Ovary (tissue), 10 donors: ENCODE measurements at regions of chrX and their contacts with region 1.

Region 1: DNA sequence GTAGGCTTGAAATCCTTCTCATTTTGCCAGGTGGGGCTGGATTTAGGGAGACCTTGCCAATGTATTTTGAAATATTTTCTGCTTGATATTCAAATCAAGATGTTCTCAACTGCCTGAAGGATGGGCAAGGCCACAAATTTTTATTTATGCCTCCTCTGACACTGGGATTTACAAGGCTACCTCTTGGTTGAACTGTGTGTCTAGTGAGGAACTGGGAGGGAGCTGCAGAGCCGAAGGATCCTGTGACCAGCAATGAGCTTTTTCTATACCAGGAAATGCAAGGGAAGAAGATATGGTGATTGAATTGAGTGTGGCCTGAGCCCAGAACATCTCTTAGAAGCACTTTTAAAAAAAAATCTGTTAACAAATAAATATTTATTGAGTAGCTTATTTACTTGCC is 14.9 kb downstream of the VSIG1 start:
- DNase-seq: no peak
- H3K4me3 ChIP-seq: no peak overlapping the region
- H3K27ac ChIP-seq: no peak overlapping the region
- H3K4me1 ChIP-seq: no peaks in the 10 kb centered on the region
- H3K27me3 ChIP-seq: no peaks in the 10 kb centered on the region
- CTCF ChIP-seq: no peak
- EP300 ChIP-seq: no peak
- POLR2A ChIP-seq: no peak

Region 2: DNA sequence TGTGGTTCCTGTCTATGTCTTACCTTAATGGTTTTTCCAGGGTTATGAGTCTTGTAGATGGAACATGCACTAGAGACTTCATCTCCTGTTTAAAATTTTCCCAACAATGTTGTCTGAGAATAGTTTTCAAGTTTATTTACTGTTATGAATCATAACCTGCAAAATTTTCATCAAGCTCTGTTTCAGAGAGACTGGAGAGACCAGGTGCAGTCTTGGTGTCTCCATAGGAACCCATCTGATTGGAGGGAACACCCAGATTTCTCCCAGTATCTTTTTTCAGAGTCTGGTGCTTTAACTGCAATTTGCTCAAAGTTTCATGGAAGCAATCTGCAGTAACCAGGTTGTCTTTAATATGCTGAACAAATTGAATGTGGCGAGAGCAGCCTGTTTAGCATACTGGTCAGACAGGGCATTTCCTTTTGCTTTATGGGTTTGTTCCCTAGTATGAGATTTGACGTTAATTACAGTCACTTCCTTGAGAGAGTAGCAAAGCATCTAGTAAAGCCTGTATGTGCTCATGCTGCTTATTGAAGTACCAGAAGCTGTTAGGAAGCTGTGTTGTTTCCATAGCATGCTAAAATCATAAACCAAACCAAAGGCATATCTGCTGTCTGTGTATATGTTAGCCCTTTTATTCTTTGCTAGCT is 33.7 kb before region 1 on chrX:
- intact Hi-C with region 1: loop called in 1 of 4 experiments (anchors 1 kb)
- DNase-seq: no peak
- H3K4me3 ChIP-seq: no peak overlapping the region
- H3K27ac ChIP-seq: no peak overlapping the region
- H3K4me1 ChIP-seq: no peaks in the 10 kb centered on the region
- H3K27me3 ChIP-seq: no peaks in the 10 kb centered on the region
- CTCF ChIP-seq: no peak
- EP300 ChIP-seq: no peak
- POLR2A ChIP-seq: no peak

Region 3: GRCh38 chrX:108117988-108118387 is 58.2 kb after region 1 on chrX:
- intact Hi-C with region 1: no loop called
- DNase-seq: no peak
- H3K4me3 ChIP-seq: no peak overlapping the region
- H3K27ac ChIP-seq: no peak overlapping the region
- H3K4me1 ChIP-seq: no peaks in the 10 kb centered on the region
- H3K27me3 ChIP-seq: no peaks in the 10 kb centered on the region
- CTCF ChIP-seq: no peak
- EP300 ChIP-seq: no peak
- POLR2A ChIP-seq: no peak

Region 4: GRCh38 chrX:108159028-108159670 is 99.3 kb after region 1 on chrX:
- intact Hi-C with region 1: no loop called
- DNase-seq: no peak
- H3K4me3 ChIP-seq: no peak overlapping the region
- H3K27ac ChIP-seq: no peak overlapping the region
- H3K4me1 ChIP-seq: no peaks in the 10 kb centered on the region
- H3K27me3 ChIP-seq: no peaks in the 10 kb centered on the region
- CTCF ChIP-seq: no peak
- EP300 ChIP-seq: no peak
- POLR2A ChIP-seq: no peak